ENCODE measurements at regions of chr5 and their contacts with region 1.

Region 1: DNA sequence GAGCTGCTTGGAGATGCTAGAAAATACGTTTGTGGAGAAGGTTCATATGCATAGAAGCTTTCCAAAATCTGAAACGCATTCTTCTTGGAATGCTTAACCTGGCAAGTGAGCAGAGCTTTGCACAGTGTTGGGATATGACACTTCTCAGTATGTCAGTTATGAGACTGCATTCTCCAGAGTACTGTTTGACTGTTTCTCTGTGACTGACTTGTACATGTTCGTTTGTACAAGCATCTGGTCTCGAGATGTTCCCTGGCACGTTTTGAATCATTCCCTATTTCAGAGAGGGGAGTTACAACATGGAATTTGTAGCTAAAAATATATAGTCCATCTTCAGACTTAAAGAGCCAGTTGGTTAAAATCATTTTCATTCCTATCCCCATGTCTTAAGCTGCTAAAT is 272.4 kb downstream of the ARRDC3 start:
- DNase-seq: no peak

Region 2: DNA sequence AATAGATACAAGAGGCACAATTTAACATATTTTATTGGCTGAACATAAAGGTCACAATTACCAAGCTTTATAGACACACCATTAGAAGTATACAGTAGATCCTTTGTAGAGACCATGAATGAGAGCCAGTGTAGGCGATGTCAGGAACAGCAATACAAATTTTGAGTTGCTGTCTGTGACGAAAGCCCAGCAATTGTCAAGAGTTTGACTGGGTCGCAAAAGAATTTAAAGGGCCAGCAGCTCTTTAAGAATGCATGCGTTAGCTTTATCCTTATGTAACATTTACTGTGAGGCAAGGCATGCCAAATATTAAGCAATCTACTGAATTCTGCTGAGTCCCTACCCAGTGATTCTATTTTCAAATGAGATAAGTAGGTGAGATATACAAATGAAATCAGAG is 35.5 kb after region 1 on chr5:
- intact Hi-C with region 1: loop called (anchors 5 kb)
- DNase-seq: no peak

Region 3: GRCh38 chr5:91212714-91213092 is 102.0 kb after region 1 on chr5:
- intact Hi-C with region 1: loop called (anchors 5 kb)
- DNase-seq: no peak

Region 4: DNA sequence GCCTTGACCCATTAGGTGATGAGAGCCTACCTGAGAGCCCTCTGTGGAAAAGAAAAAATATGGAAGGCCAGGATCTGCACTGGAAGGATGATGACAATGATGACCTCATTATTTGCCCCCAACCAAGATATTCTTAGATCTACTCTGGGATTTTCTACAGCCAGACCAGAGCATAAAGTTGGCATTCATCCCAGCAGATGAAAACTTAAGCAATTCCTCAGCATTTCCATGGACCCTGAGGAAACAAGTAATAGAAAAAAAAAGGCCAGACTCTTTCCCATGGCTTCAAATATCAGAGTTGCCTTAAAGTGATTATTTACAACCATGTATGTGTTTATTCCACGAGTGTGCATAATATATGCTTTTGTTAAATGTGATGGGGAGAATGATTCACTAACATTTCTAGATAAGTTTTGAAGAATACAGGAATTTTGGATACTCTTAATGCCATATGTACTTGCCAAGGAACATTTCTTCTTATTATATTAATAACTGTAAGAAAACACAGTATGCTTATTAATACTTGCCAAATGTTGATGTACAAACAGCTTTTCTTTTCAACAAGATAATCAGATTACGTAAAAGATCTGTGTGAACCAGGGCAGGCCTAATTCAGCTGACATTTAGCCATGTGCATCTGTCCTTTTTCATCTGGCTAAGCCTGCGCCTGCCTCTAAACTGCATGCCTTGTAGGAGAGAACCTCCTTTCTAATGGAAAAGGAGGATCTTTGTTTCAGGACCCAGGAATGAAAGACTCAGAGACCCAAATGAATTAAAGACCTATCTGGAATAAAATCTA is 177.6 kb after region 1 on chr5:
- intact Hi-C with region 1: loop called (anchors 5 kb)
- DNase-seq: no peak